GM12878 (cell line): ENCODE measurements at regions of chr5 and their contacts with region 1.

Region 1: GRCh38 chr5:116671211-116671736 is 96.7 kb upstream of the SEMA6A start:
- DNase-seq: peak; percentile 90
- ATAC-seq: peak; percentile 93
- H3K4me3 ChIP-seq: no peak overlapping the region; the same call in 1 of the 2 replicates
- H3K27ac ChIP-seq: peak overlapping the region; percentile 30; the same call in 1 of the 2 replicates
- H3K4me1 ChIP-seq: peaks cover 42% of the 10 kb centered on the region
- H3K27me3 ChIP-seq: no peaks in the 10 kb centered on the region
- CTCF ChIP-seq: no peak
- EP300 ChIP-seq: peak; percentile 87 to 95; a peak in 3 of 4 replicates
- POLR2A ChIP-seq: 0 out of 2 replicates have a peak, but pooled peaks have one; percentile 29
- RAD21 ChIP-seq: no peak

Region 2: DNA sequence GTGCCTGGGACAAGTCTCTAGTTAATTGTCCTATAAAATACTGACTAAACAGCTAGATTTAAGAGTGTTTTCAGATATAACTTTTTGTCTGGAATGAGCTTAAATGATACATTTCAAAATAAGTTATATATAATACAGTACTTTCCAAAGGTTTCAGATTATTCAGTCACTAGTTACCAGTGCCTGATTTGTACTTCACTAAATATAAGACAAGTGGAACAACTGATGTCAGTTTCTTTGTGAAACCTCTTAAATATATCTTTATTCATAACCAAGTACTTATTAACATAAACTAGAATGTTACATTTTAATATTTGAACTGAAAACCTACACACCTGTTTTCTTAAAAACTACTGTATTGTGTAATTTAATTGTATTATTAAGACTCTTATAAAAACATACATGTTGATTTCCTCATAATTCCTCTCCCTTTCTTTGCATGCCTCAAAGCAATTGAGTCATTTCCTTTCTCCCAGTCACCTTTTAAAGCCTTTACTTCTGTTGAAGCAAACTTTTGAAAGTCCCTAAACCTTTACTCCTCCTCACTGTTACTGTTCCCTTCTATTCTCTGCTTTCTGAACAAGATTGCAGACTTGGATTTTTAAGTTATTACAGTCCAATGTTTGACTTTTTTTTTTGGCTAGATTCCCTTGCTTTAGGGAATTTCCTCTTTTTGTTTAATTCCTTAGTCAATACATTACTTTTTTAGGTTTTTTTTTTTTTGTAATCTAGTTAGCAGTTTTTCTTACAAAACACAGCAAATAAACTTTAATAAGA is 88.0 kb before region 1 on chr5:
- CTCF ChIA-PET with region 1: interaction called, 4 read pairs
- POLR2A ChIA-PET with region 1: interaction called, 39 read pairs
- RAD21 ChIA-PET with region 1: interaction called, 179 read pairs
- SMC1A ChIA-PET with region 1: interaction called, 95 read pairs
- in situ Hi-C with region 1: no loop called
- intact Hi-C with region 1: no loop called
- DNase-seq: no peak
- ATAC-seq: peak; percentile 76
- H3K4me3 ChIP-seq: no peak overlapping the region
- H3K27ac ChIP-seq: no peak overlapping the region
- H3K4me1 ChIP-seq: no peaks in the 10 kb centered on the region
- H3K27me3 ChIP-seq: no peaks in the 10 kb centered on the region
- CTCF ChIP-seq: no peak
- EP300 ChIP-seq: no peak
- POLR2A ChIP-seq: no peak
- RAD21 ChIP-seq: no peak

Region 3: DNA sequence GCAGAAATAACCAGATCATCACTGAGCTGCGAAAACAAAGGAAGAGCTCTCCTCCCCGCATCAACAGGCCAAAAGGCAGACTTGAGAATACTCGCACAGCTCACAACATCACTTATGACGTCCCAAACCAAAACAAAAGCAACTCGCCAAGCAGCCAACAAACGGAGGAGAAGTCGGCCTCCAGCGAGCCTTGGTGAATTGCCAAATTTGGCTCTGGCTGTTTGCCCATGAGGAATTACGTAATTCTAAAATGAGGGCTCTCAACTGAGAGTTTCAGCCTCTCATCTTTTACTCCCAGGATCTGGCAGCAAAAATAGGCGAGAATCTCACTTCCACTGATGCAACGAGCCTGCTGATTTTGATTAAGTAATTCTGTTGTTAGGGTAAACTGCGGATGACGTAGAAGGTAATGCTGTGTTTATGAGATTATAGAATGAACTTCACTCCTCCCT is 45.0 kb before region 1 on chr5:
- CTCF ChIA-PET with region 1: interaction called, 3 read pairs
- POLR2A ChIA-PET with region 1: interaction called, 3 read pairs
- RAD21 ChIA-PET with region 1: interaction called, 5 read pairs
- SMC1A ChIA-PET with region 1: interaction called, 13 read pairs
- in situ Hi-C with region 1: no loop called
- intact Hi-C with region 1: no loop called
- DNase-seq: no peak
- ATAC-seq: no peak
- H3K4me3 ChIP-seq: no peak overlapping the region
- H3K27ac ChIP-seq: no peak overlapping the region
- H3K4me1 ChIP-seq: peaks cover 6% of the 10 kb centered on the region
- H3K27me3 ChIP-seq: no peaks in the 10 kb centered on the region
- CTCF ChIP-seq: no peak
- EP300 ChIP-seq: no peak
- POLR2A ChIP-seq: no peak
- RAD21 ChIP-seq: no peak

Region 4: GRCh38 chr5:116652196-116652729 is 19.0 kb before region 1 on chr5:
- CTCF ChIA-PET with region 1: interaction called, 18 read pairs
- POLR2A ChIA-PET with region 1: interaction called, 40 read pairs
- RAD21 ChIA-PET with region 1: interaction called, 164 read pairs
- SMC1A ChIA-PET with region 1: interaction called, 394 read pairs
- in situ Hi-C with region 1: no loop called
- intact Hi-C with region 1: no loop called
- DNase-seq: peak; percentile 85
- ATAC-seq: peak; percentile 96
- H3K4me3 ChIP-seq: no peak overlapping the region
- H3K27ac ChIP-seq: no peak overlapping the region; the same call in 1 of the 2 replicates
- H3K4me1 ChIP-seq: peaks cover 12% of the 10 kb centered on the region
- H3K27me3 ChIP-seq: no peaks in the 10 kb centered on the region
- CTCF ChIP-seq: no peak
- EP300 ChIP-seq: peak; percentile 81 to 90; a peak in 3 of 4 replicates
- POLR2A ChIP-seq: no peak
- RAD21 ChIP-seq: no peak

Region 5: DNA sequence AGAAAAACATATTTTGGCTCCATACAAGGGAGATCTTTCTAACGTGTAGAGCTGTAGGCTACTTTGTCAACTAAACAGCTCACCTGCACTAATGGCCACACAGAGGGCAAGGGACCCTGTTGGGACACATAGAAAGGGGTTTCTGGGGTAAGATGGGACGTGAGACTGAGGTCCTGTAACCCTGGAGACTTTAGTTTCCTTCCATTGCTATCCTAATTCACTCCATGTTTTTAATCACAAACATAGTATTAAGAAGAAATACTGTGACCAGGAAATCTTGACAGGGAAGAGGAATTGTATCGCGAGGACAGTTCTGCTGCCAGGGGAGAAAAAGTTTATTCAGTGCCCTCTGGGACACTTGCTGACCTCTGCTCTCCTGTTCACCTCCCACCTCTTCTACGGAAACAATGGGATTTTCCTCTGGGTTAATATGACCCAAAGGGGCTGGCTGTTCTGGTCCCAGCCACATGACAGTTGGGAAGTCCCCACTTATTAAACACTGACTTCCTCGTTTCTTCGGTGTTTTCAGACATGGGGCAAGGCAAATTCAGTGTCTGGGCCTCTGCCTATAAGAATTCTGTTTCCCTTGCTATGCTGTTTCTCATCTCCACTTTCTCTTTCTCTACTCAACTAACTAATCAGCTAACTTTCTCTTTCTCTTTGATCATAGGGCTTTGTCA is 10.2 kb after region 1 on chr5:
- CTCF ChIA-PET with region 1: interaction called, 8 read pairs
- POLR2A ChIA-PET with region 1: interaction called, 11 read pairs
- RAD21 ChIA-PET with region 1: interaction called, 38 read pairs
- SMC1A ChIA-PET with region 1: interaction called, 52 read pairs
- in situ Hi-C with region 1: no loop called
- intact Hi-C with region 1: no loop called
- DNase-seq: peak; percentile 86
- ATAC-seq: peak; percentile 98
- H3K4me3 ChIP-seq: 0 out of 2 replicates have a peak overlapping the region, but pooled peaks have one; percentile 14
- H3K27ac ChIP-seq: peak overlapping the region; percentile 84
- H3K4me1 ChIP-seq: peaks cover 20% of the 10 kb centered on the region
- H3K27me3 ChIP-seq: no peaks in the 10 kb centered on the region
- CTCF ChIP-seq: no peak
- EP300 ChIP-seq: peak; percentile 48 to 65; a peak in 2 of 4 replicates
- POLR2A ChIP-seq: 0 out of 2 replicates have a peak, but pooled peaks have one; percentile 33
- RAD21 ChIP-seq: no peak

Region 6: GRCh38 chr5:116702776-116703175 is 31.5 kb after region 1 on chr5:
- CTCF ChIA-PET with region 1: interaction called, 6 read pairs
- POLR2A ChIA-PET with region 1: interaction called, 8 read pairs
- RAD21 ChIA-PET with region 1: interaction called, 98 read pairs
- SMC1A ChIA-PET with region 1: interaction called, 49 read pairs
- in situ Hi-C with region 1: no loop called
- intact Hi-C with region 1: loop called (anchors 5 kb)
- DNase-seq: no peak
- ATAC-seq: peak; percentile 72
- H3K4me3 ChIP-seq: no peak overlapping the region
- H3K27ac ChIP-seq: peak overlapping the region; percentile 31
- H3K4me1 ChIP-seq: peaks cover 26% of the 10 kb centered on the region
- H3K27me3 ChIP-seq: no peaks in the 10 kb centered on the region
- CTCF ChIP-seq: no peak
- EP300 ChIP-seq: peak in 1 of 2 experiments; percentile 66; a peak in 1 of 4 replicates
- POLR2A ChIP-seq: no peak
- RAD21 ChIP-seq: no peak

Region 7: DNA sequence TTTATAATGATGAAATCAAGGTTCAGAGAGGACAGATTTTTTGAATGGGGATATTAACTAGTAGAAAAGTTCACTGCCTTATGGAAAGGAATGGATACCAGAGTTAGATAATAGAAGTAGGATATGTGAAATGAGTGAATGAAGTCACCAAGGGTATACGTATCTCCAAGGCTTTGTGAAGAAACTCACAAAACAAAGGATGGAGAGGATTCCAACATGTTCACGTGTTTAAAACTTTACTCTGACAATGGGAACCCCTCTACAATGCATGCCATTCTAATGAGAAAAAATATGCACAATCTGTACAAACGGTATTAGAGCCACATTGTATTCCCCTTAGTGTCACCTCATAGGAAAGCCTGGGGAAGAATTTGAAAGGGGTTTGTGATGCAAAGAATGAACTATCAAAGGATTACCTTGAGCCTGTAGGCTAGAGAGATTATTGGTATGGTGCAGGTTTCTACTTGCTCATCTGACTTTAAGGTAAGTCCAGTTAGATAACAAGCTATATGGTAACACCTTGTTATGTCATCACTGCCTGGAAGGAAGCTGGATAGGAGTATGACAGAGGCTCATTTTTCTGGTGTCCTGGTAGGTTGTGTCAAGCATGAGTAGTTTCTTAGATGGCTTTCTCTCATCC is 153.6 kb after region 1 on chr5:
- CTCF ChIA-PET with region 1: no interaction called
- POLR2A ChIA-PET with region 1: no interaction called
- RAD21 ChIA-PET with region 1: no interaction called
- SMC1A ChIA-PET with region 1: no interaction called
- in situ Hi-C with region 1: no loop called
- intact Hi-C with region 1: no loop called
- DNase-seq: no peak
- ATAC-seq: no peak
- H3K4me3 ChIP-seq: no peak overlapping the region
- H3K27ac ChIP-seq: no peak overlapping the region
- H3K4me1 ChIP-seq: no peaks in the 10 kb centered on the region
- H3K27me3 ChIP-seq: no peaks in the 10 kb centered on the region
- CTCF ChIP-seq: no peak
- EP300 ChIP-seq: no peak
- POLR2A ChIP-seq: no peak
- RAD21 ChIP-seq: no peak

Region 8: DNA sequence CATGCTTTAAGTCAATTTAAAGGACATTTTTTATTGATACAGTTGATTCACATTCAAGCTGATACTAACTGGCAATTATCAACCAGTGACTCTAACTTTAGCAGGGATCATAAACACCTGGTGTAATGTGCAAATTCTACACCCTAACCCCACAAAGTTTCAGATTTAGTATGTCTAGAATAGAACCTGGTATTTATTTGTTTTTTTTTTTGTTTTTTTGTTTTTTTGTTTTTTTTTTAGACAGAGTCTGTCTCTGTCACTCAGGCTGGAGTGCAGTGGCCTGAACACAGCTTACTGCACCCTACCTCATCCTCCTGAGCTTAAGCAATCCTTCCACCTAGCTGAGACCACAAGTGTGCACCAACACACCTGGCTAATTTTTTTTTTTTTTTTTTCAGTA is 214.6 kb after region 1 on chr5:
- CTCF ChIA-PET with region 1: no interaction called
- POLR2A ChIA-PET with region 1: no interaction called
- RAD21 ChIA-PET with region 1: interaction called, 3 read pairs
- SMC1A ChIA-PET with region 1: interaction called, 21 read pairs
- in situ Hi-C with region 1: no loop called
- intact Hi-C with region 1: no loop called
- DNase-seq: no peak
- ATAC-seq: peak; percentile 72
- H3K4me3 ChIP-seq: no peak overlapping the region
- H3K27ac ChIP-seq: no peak overlapping the region
- H3K4me1 ChIP-seq: peaks cover 23% of the 10 kb centered on the region
- H3K27me3 ChIP-seq: no peaks in the 10 kb centered on the region
- CTCF ChIP-seq: no peak; a peak in 1 of 6 replicates
- EP300 ChIP-seq: peak in 1 of 2 experiments; percentile 49; a peak in 1 of 4 replicates
- POLR2A ChIP-seq: no peak
- RAD21 ChIP-seq: no peak